ENCODE measurements at regions of chr6 and their contacts with region 1.

Region 1: DNA sequence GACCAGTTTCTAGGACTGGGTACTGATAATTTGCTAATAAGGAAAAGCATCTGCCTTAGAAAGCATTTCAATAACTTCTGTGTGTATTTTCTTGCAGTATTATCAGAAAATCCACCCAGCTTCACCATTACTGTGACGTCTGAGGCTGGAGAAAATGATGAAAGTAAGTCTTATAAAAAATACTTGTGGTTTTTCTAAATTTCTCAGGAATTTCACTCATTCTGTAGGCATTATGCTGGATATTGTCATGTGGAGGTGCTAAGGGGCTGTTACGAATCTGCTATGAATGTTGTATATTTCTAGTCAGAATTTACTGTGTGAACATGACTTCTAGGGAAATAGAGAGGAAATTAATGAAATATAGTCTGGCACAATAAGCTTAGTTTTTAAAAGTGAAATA is 8.9 kb downstream of the RWDD1 start:
- DNase-seq: no peak
- H3K4me3 Mint-ChIP-seq: no peak overlapping the region
- H3K27ac Mint-ChIP-seq: no peak overlapping the region
- H3K4me1 Mint-ChIP-seq: peaks cover 28% of the 10 kb centered on the region
- H3K27me3 Mint-ChIP-seq: no peaks in the 10 kb centered on the region

Region 2: GRCh38 chr6:116536216-116536621 is 44.0 kb before region 1 on chr6:
- CTCF ChIA-PET with region 1: no interaction called
- POLR2A ChIA-PET with region 1: no interaction called
- intact Hi-C with region 1: no loop called
- DNase-seq: no peak
- H3K4me3 Mint-ChIP-seq: no peak overlapping the region
- H3K27ac Mint-ChIP-seq: no peak overlapping the region
- H3K4me1 Mint-ChIP-seq: no peaks in the 10 kb centered on the region
- H3K27me3 Mint-ChIP-seq: peaks cover 20% of the 10 kb centered on the region

Region 3: DNA sequence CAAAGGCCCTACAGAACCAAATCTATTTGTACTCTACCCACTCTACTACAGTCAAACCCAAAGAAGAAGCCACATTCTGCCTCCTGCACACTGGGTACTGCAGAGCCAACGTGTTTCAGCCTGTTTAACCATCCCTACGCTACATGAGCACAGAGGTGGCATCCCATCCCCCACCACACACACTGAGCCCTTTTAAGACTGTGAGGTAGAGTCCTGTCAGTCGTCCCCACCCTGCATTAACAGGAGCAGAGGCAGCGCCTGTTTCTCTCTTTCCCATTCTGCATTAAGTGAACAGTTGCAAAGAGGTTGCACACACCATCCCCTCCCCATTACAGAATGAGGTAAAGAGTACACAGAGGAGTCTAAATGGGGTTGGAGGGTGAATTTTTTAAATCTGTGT is 30.9 kb after region 1 on chr6:
- CTCF ChIA-PET with region 1: no interaction called
- POLR2A ChIA-PET with region 1: no interaction called
- intact Hi-C with region 1: no loop called
- DNase-seq: no peak
- H3K4me3 Mint-ChIP-seq: no peak overlapping the region
- H3K27ac Mint-ChIP-seq: no peak overlapping the region
- H3K4me1 Mint-ChIP-seq: peaks cover 6% of the 10 kb centered on the region
- H3K27me3 Mint-ChIP-seq: no peaks in the 10 kb centered on the region

Region 4: GRCh38 chr6:116648156-116648555 is 68.0 kb after region 1 on chr6:
- CTCF ChIA-PET with region 1: no interaction called
- POLR2A ChIA-PET with region 1: no interaction called
- intact Hi-C with region 1: loop called (anchors 2 kb)
- DNase-seq: no peak
- H3K4me3 Mint-ChIP-seq: no peak overlapping the region
- H3K27ac Mint-ChIP-seq: no peak overlapping the region
- H3K4me1 Mint-ChIP-seq: peaks cover 8% of the 10 kb centered on the region
- H3K27me3 Mint-ChIP-seq: no peaks in the 10 kb centered on the region

Measured in activated CD4-positive, alpha-beta memory T cell treated with anti-CD3 and anti-CD28 coated beads for 36 hours (primary cell).